Spleen (tissue), 13 donors: ENCODE measurements at regions of chr4 and their contacts with region 1.

Region 1: DNA sequence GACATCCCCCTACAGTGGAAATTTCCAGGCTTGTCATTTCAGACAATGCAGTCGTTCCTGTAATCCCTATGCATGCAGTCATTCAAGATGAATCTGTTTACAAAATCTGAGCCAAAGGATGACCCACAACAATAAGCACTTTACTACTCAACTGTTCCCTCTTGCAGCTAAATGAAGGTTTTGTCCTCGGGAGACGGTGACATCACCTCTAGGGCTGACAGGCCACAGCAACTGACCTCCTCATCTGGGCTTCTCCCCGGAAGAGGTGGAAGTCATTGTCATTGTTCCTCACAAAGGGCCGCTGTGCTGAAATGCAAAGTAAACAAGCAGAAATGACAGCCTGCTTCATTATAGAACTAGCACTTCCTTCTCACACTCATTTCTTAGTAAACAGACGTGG is 29.2 kb downstream of the CLRN2 start:
- DNase-seq: no peak
- H3K4me3 ChIP-seq: no peak overlapping the region
- H3K27ac ChIP-seq: no peak overlapping the region
- H3K4me1 ChIP-seq: peaks cover 0 to 5% (median 0%) of the 10 kb centered on the region in 6 donors
- H3K27me3 ChIP-seq: no peaks in the 10 kb centered on the region
- CTCF ChIP-seq: no peak
- POLR2A ChIP-seq: no peak

Region 2: DNA sequence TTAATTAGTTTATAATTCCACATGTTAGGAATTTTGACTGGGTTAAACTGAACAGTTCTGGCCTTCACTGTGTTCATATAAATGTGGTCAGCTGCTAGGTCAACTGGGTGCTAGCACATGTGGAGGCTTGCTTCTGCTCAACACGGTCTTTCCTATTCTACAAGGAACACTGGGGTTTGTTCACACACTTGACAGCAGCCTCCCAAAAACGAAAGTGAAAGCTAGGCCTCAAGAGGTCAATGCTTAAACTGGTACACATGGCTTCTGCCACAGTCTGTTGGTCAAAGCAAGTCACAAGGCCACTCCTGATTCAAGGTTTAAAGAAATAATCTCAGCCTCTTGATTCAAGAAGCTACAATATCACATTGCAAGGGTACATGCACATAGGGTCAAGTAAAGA is 158.8 kb before region 1 on chr4:
- intact Hi-C with region 1: no loop called
- DNase-seq: no peak
- H3K4me3 ChIP-seq: peak overlapping the region in 1 of 8 donors; percentile 5
- H3K27ac ChIP-seq: peak overlapping the region in 1 of 8 donors; percentile 1
- H3K4me1 ChIP-seq: peaks cover 0 to 10% (median 3%) of the 10 kb centered on the region in 6 donors
- H3K27me3 ChIP-seq: no peaks in the 10 kb centered on the region
- CTCF ChIP-seq: no peak
- POLR2A ChIP-seq: no peak

Region 3: GRCh38 chr4:17636696-17637622 is 92.8 kb after region 1 on chr4:
- intact Hi-C with region 1: loop called (anchors 2 kb)
- DNase-seq: peak; percentile 89
- H3K4me3 ChIP-seq: no peak overlapping the region
- H3K27ac ChIP-seq: no peak overlapping the region
- H3K4me1 ChIP-seq: peaks cover 0 to 7% (median 3%) of the 10 kb centered on the region in 6 donors
- H3K27me3 ChIP-seq: no peaks in the 10 kb centered on the region
- CTCF ChIP-seq: peak; percentile 60 to 95 (median 89)
- POLR2A ChIP-seq: no peak

Region 4: GRCh38 chr4:17771284-17771908 is 227.2 kb after region 1 on chr4:
- intact Hi-C with region 1: no loop called
- DNase-seq: no peak
- H3K4me3 ChIP-seq: no peak overlapping the region
- H3K27ac ChIP-seq: no peak overlapping the region
- H3K4me1 ChIP-seq: no peaks in the 10 kb centered on the region
- H3K27me3 ChIP-seq: peaks cover 0 to 4% (median 0%) of the 10 kb centered on the region in 7 donors
- CTCF ChIP-seq: no peak
- POLR2A ChIP-seq: no peak

Region 5: DNA sequence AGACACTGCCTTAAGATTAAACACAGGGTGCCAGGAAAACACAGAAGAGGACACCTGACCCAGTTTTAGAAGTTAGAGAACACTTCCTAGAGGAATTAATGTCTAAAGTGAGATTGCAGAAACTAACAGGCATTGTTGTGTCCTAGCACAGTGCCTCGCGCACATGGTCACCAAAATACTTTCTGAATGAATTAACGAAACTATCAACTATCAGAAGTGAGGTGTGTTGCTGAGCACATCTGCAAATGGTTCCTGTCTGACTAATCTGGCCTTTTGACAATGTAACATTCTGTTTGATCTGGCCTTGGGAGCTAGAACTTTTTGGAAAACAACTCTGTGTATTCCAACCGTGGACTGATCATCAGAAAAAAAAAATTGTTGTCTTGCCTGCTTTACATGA is 1034.1 kb after region 1 on chr4:
- intact Hi-C with region 1: no loop called
- DNase-seq: no peak
- H3K4me3 ChIP-seq: no peak overlapping the region
- H3K27ac ChIP-seq: no peak overlapping the region
- H3K4me1 ChIP-seq: no peaks in the 10 kb centered on the region
- H3K27me3 ChIP-seq: peaks cover 0 to 19% (median 0%) of the 10 kb centered on the region in 7 donors
- CTCF ChIP-seq: no peak
- POLR2A ChIP-seq: no peak

Region 6: GRCh38 chr4:18593445-18594002 is 1049.3 kb after region 1 on chr4:
- intact Hi-C with region 1: loop called (anchors 5 kb)
- DNase-seq: no peak
- H3K4me3 ChIP-seq: no peak overlapping the region
- H3K27ac ChIP-seq: no peak overlapping the region
- H3K4me1 ChIP-seq: peaks cover 0 to 7% (median 6%) of the 10 kb centered on the region in 6 donors
- H3K27me3 ChIP-seq: peaks cover 0 to 28% (median 0%) of the 10 kb centered on the region in 7 donors
- CTCF ChIP-seq: peak; percentile 29 to 80 (median 70)
- POLR2A ChIP-seq: no peak